AG04449 (cell line): ENCODE measurements at regions of chr10 and their contacts with region 1.

Region 1: DNA sequence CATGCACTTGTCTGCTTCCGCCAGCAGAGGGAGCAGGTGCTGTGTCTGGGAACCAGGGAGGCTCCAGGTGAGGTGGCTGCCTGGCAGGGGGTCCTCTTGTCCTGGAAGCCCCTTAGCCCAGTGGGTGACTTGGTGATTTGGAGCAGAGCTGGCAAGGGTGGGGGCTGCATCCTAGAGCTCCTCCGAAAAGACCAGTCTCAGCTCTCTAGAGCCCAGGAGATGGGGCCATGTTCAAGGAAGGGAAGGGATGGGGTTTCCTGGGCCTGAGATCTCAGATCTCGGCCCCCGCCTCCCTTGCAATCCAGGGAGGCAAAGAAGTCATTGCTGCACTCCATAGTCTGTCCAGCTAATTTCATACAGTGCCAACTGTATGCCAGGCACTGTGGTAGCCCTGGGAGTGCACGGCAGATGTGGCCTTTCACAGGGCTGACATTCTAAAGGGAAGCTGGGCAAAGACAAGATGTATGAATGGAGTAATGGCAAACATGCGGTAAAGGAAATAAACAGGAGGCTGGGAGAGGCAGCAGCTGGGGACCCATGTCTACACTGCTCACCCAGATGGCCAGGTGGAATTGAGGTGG is 20.4 kb upstream of the SFRP5 start:
- DNase-seq: no peak
- H3K4me3 ChIP-seq: no peak overlapping the region
- CTCF ChIP-seq: peak; percentile 97

Region 2: GRCh38 chr10:97771055-97771811 is 21.0 kb before region 1 on chr10:
- CTCF ChIA-PET with region 1: interaction called, 16 read pairs
- POLR2A ChIA-PET with region 1: no interaction called
- DNase-seq: no peak
- H3K4me3 ChIP-seq: peak overlapping the region; percentile 37
- CTCF ChIP-seq: no peak

Region 3: DNA sequence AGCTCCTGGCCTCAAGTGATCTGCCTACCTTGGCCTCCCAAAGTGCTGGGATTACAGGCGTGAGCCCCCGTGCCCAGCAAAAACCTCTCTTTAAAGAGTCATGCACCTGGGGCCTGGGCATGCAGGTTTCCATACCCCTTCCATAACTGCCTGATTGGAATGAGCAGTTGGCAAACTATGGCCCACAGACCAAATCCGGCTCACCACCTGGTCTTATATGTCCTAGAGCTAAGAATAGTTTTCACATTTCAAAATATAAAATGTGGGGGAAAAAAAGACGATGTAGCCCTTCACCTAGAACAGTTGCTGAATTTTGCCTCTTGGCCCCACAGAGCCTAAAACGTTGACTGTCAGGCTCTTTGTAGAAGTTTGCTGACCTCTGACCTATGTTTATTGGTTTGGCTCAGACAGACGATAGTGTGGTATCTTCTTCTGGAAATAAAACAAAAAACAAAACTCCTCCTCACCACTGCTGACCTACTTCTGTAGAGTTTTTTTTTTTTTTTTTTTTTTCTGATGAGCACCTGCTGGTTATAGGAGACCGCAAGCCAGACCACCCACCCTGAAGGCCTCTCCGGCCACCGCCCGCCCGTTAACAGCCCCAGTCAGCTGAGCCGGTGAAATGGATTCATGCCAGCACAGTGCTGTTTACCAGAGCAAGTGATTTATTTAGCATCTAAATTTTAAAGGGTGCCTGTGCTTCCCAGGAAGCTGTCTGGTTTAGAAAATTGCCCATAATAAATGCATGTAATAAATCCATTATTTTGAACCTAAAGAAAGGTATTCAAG is 13.1 kb after region 1 on chr10:
- CTCF ChIA-PET with region 1: interaction called, 14 read pairs
- POLR2A ChIA-PET with region 1: no interaction called
- DNase-seq: no peak
- H3K4me3 ChIP-seq: no peak overlapping the region
- CTCF ChIP-seq: no peak

Region 4: GRCh38 chr10:97861097-97861750 is 69.0 kb after region 1 on chr10:
- CTCF ChIA-PET with region 1: interaction called, 13 read pairs
- POLR2A ChIA-PET with region 1: no interaction called
- DNase-seq: peak; percentile 14
- H3K4me3 ChIP-seq: no peak overlapping the region
- CTCF ChIP-seq: no peak

Region 5: GRCh38 chr10:98045785-98046389 is 253.7 kb after region 1 on chr10:
- CTCF ChIA-PET with region 1: interaction called, 62 read pairs
- POLR2A ChIA-PET with region 1: no interaction called
- DNase-seq: no peak
- H3K4me3 ChIP-seq: no peak overlapping the region
- CTCF ChIP-seq: peak; percentile 75